Mammary epithelial cell (primary cell): ENCODE measurements at regions of chr6 and their contacts with region 1.

Region 1: GRCh38 chr6:46993846-46994245 is 48.3 kb downstream of the ADGRF1 start:
- DNase-seq: peak; percentile 95
- H3K4me3 ChIP-seq: no peak overlapping the region
- H3K27ac ChIP-seq: peak overlapping the region; percentile 77
- H3K4me1 ChIP-seq: peaks cover 41% of the 10 kb centered on the region
- H3K27me3 ChIP-seq: no peaks in the 10 kb centered on the region
- CTCF ChIP-seq: no peak

Region 2: GRCh38 chr6:46221222-46221793 is 772.5 kb before region 1 on chr6:
- CTCF ChIA-PET with region 1: no interaction called
- dilution Hi-C with region 1: no loop called
- in situ Hi-C with region 1: no loop called
- intact Hi-C with region 1: loop called (anchors 5 kb)
- DNase-seq: peak; percentile 21
- H3K4me3 ChIP-seq: no peak overlapping the region
- H3K27ac ChIP-seq: no peak overlapping the region
- H3K4me1 ChIP-seq: no peaks in the 10 kb centered on the region
- H3K27me3 ChIP-seq: peaks cover 2% of the 10 kb centered on the region
- CTCF ChIP-seq: peak; percentile 83 to 88

Region 3: GRCh38 chr6:46704562-46704961 is 289.3 kb before region 1 on chr6:
- CTCF ChIA-PET with region 1: no interaction called
- dilution Hi-C with region 1: loop called (anchors 25 kb)
- in situ Hi-C with region 1: loop called (anchors 25 kb)
- intact Hi-C with region 1: loop called (anchors 1 kb)
- DNase-seq: peak; percentile 45
- H3K4me3 ChIP-seq: no peak overlapping the region
- H3K27ac ChIP-seq: no peak overlapping the region
- H3K4me1 ChIP-seq: peaks cover 11% of the 10 kb centered on the region
- H3K27me3 ChIP-seq: no peaks in the 10 kb centered on the region
- CTCF ChIP-seq: peak; percentile 31 to 49

Region 4: GRCh38 chr6:46848684-46849360 is 145.0 kb before region 1 on chr6:
- CTCF ChIA-PET with region 1: no interaction called
- dilution Hi-C with region 1: no loop called
- in situ Hi-C with region 1: loop called (anchors 5 to 10 kb)
- intact Hi-C with region 1: loop called (anchors 1 kb)
- DNase-seq: peak; percentile 73
- H3K4me3 ChIP-seq: no peak overlapping the region
- H3K27ac ChIP-seq: no peak overlapping the region
- H3K4me1 ChIP-seq: peaks cover 15% of the 10 kb centered on the region
- H3K27me3 ChIP-seq: no peaks in the 10 kb centered on the region
- CTCF ChIP-seq: peak; percentile 69 to 96